WTC11 (cell line): ENCODE measurements at regions of chrX and their contacts with region 1.

Region 1: DNA sequence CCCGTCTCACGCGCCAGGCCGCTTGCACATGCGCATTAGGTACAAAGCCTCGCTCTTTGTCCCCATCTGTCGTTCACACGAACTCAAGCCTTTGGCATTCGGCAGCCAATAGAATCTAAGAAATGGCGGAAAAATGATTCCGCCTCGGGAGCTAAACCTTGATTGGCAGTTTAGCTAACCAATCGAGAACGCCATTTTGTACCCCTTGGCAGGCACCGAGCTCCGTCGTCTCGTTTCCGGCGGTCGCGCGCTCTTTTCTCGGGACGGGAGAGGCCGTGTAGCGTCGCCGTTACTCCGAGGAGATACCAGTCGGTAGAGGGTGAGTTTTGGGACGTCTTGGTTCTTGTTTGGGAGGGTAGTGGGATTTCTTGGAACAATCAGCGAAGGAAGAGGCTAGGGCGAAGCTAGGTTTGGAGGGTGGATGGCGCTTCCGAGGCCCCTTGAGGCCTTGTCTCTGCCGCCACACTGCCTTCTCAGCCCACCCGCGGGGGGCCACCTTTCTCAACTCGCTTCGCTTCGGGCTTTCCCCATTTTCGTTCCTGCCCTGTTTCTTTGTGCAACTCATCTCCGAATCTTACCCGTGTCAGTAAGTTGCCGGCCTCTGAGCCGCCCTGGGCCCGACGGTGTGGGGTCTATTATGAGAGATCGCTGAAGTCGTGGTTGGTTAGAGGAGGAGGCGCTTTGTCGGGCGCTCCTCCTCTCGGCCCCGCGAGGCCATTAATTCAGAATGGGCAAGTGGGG is at the start of gene NONO:
- DNase-seq: peak; percentile 79
- ATAC-seq: peak; percentile 88
- H3K4me3 Mint-ChIP-seq: peak within 1 kb of the TSS; percentile 98
- H3K27ac Mint-ChIP-seq: peak within 1 kb of the TSS; percentile 100
- H3K4me1 Mint-ChIP-seq: peaks cover 12% of the 10 kb centered on the region
- H3K27me3 Mint-ChIP-seq: no peaks in the 10 kb centered on the region; the same call in 1 of the 2 replicates
- CTCF ChIP-seq: no peak
- total RNA-seq, gene NONO: 665 to 706 TPM (median 674 TPM) in 3 replicates

Region 2: DNA sequence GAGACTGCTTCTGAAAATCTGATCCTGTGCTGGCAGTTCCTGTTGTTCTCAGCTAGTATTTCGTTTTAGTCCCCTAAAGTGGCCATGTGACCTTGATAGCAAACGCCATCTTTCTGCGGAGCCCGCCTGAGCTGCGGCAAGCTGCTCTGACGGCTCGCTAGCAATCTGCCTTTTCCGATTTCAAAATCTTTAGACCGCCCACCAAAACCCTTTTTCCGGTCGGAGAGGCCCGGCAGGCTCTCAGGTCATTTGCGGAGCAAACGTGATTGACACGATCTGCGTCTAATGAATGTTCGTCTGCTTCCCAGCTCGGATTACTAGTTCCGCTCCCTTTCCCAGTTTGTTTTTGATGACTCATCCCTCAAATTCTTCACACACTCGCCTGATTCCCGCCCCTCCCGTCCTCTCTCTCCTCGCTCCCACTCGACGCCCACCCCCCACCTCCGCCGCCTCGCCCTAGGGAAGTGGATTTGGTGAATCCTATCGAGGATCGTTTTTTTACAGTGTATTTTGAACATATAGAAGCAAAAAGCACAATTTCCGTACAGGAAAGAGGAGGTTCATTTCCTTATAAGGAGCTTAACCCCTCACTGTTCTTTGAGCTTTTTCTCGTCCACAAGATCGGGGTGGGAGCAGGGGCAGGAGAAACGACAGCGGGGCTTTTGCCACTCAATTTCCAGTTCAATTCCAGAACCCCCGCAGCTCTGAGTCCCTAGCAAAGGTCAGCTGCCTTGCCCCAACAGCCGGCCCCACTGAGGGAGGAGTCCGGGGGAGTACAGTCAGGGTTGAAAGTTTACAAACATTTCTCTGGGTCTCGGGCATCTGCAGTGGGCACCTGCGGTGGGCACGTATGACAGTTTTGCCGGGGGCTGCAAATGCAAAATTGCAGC is 101.4 kb before region 1 on chrX:
- CTCF ChIA-PET with region 1: no interaction called
- POLR2A ChIA-PET with region 1: interaction called, 21 read pairs
- DNase-seq: peak; percentile 78
- ATAC-seq: peak; percentile 91
- H3K4me3 Mint-ChIP-seq: peak overlapping the region; percentile 73
- H3K27ac Mint-ChIP-seq: peak overlapping the region; percentile 98
- H3K4me1 Mint-ChIP-seq: peaks cover 38% of the 10 kb centered on the region
- H3K27me3 Mint-ChIP-seq: no peaks in the 10 kb centered on the region
- CTCF ChIP-seq: no peak

Region 3: DNA sequence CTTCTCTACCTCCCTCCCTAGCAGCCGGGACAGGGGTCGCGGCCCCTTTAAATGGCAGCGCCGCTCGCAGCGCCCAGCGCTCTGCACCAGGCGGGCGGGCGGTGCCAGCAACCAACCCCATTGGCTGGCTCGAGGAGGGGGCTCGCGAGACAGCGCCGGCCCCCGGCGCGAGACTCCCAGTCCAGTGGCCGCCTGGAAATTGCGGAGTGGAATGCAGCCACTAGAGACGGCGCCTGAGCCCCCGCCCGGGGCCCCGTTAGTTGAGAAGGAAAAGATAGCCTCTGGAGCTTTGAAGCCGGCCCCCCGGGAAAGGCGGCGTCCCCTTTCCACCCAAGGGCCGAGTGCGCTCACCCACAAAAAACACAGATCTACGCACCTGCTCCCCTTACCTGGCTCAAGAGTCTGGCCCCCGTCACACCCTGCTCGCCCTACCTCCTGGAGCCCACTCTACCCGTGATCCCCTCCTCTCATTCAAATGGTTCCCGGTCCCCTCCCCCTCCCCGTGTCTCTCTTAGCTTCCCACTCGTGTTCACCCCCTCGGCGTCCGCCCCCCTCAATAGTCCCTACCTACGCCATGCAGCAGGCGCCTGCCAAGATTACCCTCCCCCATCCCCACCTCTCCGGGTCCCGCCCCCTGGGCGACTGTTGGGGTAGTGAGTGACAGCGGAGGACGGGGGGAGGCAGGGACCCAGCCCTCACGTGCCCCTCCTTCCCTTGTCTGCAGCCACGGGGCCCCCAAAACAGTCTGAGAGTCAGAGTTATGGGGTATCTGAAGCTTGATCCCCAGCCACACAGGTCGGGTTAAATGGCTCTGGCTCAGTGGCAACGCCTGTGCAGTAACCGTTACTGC is 29.3 kb before region 1 on chrX and contains the start of gene ZMYM3:
- CTCF ChIA-PET with region 1: interaction called, 12 read pairs
- POLR2A ChIA-PET with region 1: interaction called, 17 read pairs
- DNase-seq: peak; percentile 81
- ATAC-seq: peak; percentile 70
- H3K4me3 Mint-ChIP-seq: peak within 1 kb of the TSS; percentile 90
- H3K27ac Mint-ChIP-seq: peak within 1 kb of the TSS; percentile 83
- H3K4me1 Mint-ChIP-seq: peaks cover 21% of the 10 kb centered on the region
- H3K27me3 Mint-ChIP-seq: no peaks in the 10 kb centered on the region
- CTCF ChIP-seq: no peak
- total RNA-seq, gene ZMYM3: 77.5 to 91.2 TPM (median 87.4 TPM) in 3 replicates

Region 4: GRCh38 chrX:71365876-71366673 is 82.5 kb after region 1 on chrX and contains the start of gene TAF1:
- CTCF ChIA-PET with region 1: interaction called, 3 read pairs
- POLR2A ChIA-PET with region 1: interaction called, 12 read pairs
- DNase-seq: peak; percentile 83
- ATAC-seq: peak; percentile 95
- H3K4me3 Mint-ChIP-seq: peak within 1 kb of the TSS; percentile 80
- H3K27ac Mint-ChIP-seq: peak within 1 kb of the TSS; percentile 95
- H3K4me1 Mint-ChIP-seq: peaks cover 8% of the 10 kb centered on the region
- H3K27me3 Mint-ChIP-seq: no peaks in the 10 kb centered on the region
- CTCF ChIP-seq: no peak
- total RNA-seq, gene TAF1: 31.2 to 35.5 TPM (median 35.0 TPM) in 3 replicates